K562 (cell line): ENCODE measurements at regions of chr6 and their contacts with region 1.

Region 1: DNA sequence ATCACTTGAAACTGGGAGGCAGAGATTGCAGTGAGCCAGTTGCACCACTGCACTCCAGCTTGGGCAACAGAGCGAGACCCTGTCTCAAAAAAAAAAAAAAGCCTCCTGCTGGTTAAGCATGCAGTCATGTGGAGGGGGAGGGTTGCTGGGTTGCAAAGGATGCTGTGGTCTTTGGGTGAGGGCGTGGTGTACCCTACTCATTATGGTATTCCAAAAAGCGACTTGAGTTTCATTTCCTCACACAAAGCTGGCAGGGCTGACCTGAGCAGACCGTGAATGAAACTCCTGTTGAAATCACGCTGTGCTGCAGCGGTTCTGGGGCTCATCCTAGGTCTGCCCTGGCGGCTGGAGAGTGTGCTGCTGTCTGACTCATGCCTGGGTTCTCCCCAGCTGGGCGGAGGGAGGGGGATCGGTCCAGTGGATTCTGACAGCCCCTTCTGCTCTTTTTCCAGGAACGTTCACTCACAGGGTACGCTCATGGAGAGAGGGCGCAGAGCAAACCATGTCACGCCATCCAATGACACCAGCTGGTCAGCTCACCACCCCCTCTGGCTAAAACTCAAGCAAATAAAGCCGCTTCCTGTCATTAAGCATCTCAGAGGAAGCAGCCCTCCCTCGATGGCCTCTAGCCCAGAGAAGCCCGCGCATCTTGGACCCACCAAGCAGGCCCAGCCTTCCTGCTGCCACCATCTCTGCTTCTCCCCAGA is 166.2 kb downstream of the SCML4 start:
- DNase-seq: no peak
- ATAC-seq: peak; percentile 76
- H3K4me3 ChIP-seq: no peak overlapping the region
- H3K27ac ChIP-seq: no peak overlapping the region
- H3K4me1 ChIP-seq: peaks cover 0 to 5% of the 10 kb centered on the region in 2 experiments; a peak in 2 of 5 replicates
- H3K27me3 ChIP-seq: peaks cover 41 to 52% of the 10 kb centered on the region in 2 experiments
- CTCF ChIP-seq: no peak
- EP300 ChIP-seq: no peak
- POLR2A ChIP-seq: no peak
- RAD21 ChIP-seq: no peak

Region 2: DNA sequence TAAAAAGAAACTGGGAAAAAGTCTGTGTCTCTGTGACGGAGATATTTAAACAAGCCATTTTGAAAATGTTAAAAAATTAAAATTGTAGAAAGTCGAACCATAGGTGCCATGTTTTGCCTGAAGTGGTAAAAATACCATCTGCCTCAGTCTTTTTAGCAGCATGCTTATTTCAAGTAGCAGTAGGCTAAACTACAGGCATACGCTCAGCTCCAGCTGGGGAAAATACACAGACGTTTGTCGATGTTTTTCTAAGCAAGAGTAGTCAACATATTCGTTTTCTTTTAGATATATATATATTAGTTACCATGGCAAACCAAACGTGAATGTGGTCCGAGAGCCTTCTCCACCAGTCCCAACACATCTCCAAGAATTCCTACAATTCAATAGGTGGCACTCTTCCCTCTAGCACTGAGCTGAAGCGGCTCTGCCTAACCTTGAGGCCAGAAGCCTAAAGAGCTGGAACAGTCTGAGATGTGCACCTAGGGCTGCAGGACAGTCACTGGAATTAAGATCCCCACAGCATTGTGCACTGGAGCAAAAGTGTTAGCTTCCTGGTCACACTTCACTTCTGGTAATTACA is 472.4 kb before region 1 on chr6:
- CTCF ChIA-PET with region 1: no interaction called
- POLR2A ChIA-PET with region 1: no interaction called
- in situ Hi-C with region 1: no loop called
- intact Hi-C with region 1: loop called (anchors 10 kb)
- DNase-seq: peak in 1 of 4 experiments; percentile 21
- ATAC-seq: peak; percentile 84
- H3K4me3 ChIP-seq: no peak overlapping the region
- H3K27ac ChIP-seq: no peak overlapping the region
- H3K4me1 ChIP-seq: no peaks in the 10 kb centered on the region
- H3K27me3 ChIP-seq: no peaks in the 10 kb centered on the region
- CTCF ChIP-seq: peak; percentile 22 to 51 (median 29); a peak in 4 of 6 replicates
- EP300 ChIP-seq: no peak
- POLR2A ChIP-seq: no peak
- RAD21 ChIP-seq: peak in 1 of 2 experiments; percentile 61; a peak in 2 of 4 replicates

Region 3: GRCh38 chr6:107843400-107843799 is 185.5 kb after region 1 on chr6:
- CTCF ChIA-PET with region 1: no interaction called
- POLR2A ChIA-PET with region 1: no interaction called
- in situ Hi-C with region 1: no loop called
- intact Hi-C with region 1: no loop called
- DNase-seq: no peak
- ATAC-seq: no peak
- H3K4me3 ChIP-seq: no peak overlapping the region
- H3K27ac ChIP-seq: no peak overlapping the region
- H3K4me1 ChIP-seq: peaks cover 0 to 7% of the 10 kb centered on the region in 2 experiments; a peak in 3 of 5 replicates
- H3K27me3 ChIP-seq: peaks cover 13 to 24% of the 10 kb centered on the region in 2 experiments; a peak in 4 of 5 replicates
- CTCF ChIP-seq: no peak
- EP300 ChIP-seq: no peak
- POLR2A ChIP-seq: no peak
- RAD21 ChIP-seq: no peak